Activated B cell treated with CpG ODN at 0.5 μM for 24 hours (primary cell): ENCODE measurements at regions of chr14 and their contacts with region 1.

Region 1: DNA sequence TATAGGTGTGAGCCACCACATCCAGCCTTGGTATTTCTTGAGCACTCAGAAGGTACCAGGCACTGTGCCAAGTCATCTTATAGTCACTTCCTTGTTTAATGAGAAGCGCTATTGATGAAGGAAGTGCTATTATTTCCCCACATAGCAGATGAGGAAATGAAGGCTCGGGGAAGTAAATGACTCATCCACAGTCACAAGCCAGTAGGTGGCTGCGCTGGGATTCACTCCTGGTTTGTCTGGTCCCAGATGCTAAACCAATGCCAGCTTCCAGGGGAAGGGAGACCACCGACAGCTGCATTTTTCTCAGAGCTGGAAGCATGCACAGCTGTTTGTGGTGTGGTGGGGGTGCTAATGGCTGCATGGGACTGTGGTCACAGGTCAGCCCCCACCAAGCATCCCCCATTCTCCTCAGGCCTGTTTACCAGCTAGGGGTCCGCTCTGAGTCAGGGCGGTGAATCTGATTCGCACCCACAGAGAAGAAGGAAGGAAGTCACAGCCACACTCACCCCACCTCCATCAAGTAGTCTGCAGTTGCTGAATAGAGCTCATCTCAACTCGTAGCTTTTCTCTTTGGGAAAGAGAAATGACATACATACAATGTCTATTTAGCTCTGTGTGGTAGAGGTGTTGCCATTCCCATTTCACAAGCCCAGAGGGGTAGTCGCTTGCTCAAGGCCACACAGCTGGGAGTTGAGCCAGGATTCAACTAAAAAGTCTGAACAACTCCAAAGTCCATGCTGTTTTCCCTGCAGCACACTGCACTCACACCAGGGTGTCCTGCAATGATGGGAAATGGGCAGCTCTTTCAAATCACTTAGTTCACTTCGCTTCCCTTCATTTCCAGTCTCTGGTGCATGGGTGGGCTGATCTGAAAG is 6.3 kb upstream of the LTBP2 start:
- DNase-seq: peak; percentile 32
- ATAC-seq: peak; percentile 71
- H3K4me3 Mint-ChIP-seq: peak overlapping the region; percentile 62
- H3K27ac Mint-ChIP-seq: peak overlapping the region; percentile 80
- H3K4me1 Mint-ChIP-seq: peaks cover 57% of the 10 kb centered on the region
- H3K27me3 Mint-ChIP-seq: peaks cover 7% of the 10 kb centered on the region
- CTCF ChIP-seq: no peak

Region 2: GRCh38 chr14:74595006-74595735 is 23.1 kb before region 1 on chr14:
- CTCF ChIA-PET with region 1: interaction called, 14 read pairs
- POLR2A ChIA-PET with region 1: interaction called, 3 read pairs
- intact Hi-C with region 1: loop called (anchors 1 kb)
- DNase-seq: no peak
- ATAC-seq: no peak
- H3K4me3 Mint-ChIP-seq: no peak overlapping the region
- H3K27ac Mint-ChIP-seq: no peak overlapping the region
- H3K4me1 Mint-ChIP-seq: peaks cover 29% of the 10 kb centered on the region
- H3K27me3 Mint-ChIP-seq: no peaks in the 10 kb centered on the region
- CTCF ChIP-seq: no peak